ENCODE measurements at regions of chr2 and their contacts with region 1.

Region 1: GRCh38 chr2:195656859-195657633 is at the start of gene SLC39A10:
- DNase-seq: peak; percentile 99
- H3K4me3 ChIP-seq: peak within 1 kb of the TSS; percentile 61 to 99 (median 96)
- H3K27ac ChIP-seq: peak within 1 kb of the TSS; percentile 93 to 100 (median 100)
- H3K4me1 ChIP-seq: peaks cover 0 to 32% (median 22%) of the 10 kb centered on the region in 4 donors
- H3K27me3 ChIP-seq: no peaks in the 10 kb centered on the region
- CTCF ChIP-seq: peak in 2 of 4 experiments; percentile 10 to 43
- EP300 ChIP-seq: no peak
- POLR2A ChIP-seq: peak; percentile 89 to 94
- total RNA-seq, gene SLC39A10: 6.1 to 10.5 (median 9.7) TPM

Region 2: GRCh38 chr2:195498176-195498575 is 158.9 kb before region 1 on chr2:
- intact Hi-C with region 1: loop called (anchors 5 kb)
- DNase-seq: no peak
- H3K4me3 ChIP-seq: no peak overlapping the region
- H3K27ac ChIP-seq: no peak overlapping the region
- H3K4me1 ChIP-seq: no peaks in the 10 kb centered on the region
- H3K27me3 ChIP-seq: no peaks in the 10 kb centered on the region
- CTCF ChIP-seq: peak in 2 of 4 experiments; percentile 19 to 22
- EP300 ChIP-seq: no peak
- POLR2A ChIP-seq: no peak

Region 3: GRCh38 chr2:196068271-196069209 is 411.5 kb after region 1 on chr2 and contains the start of gene DNAH7:
- intact Hi-C with region 1: loop called (anchors 2 kb)
- DNase-seq: peak; percentile 95
- H3K4me3 ChIP-seq: peak within 1 kb of the TSS; percentile 82 to 87 (median 84)
- H3K27ac ChIP-seq: peak within 1 kb of the TSS; percentile 69 to 80 (median 72)
- H3K4me1 ChIP-seq: peaks cover 0 to 10% (median 6%) of the 10 kb centered on the region in 4 donors
- H3K27me3 ChIP-seq: no peaks in the 10 kb centered on the region
- CTCF ChIP-seq: peak; percentile 64 to 71 (median 65)
- EP300 ChIP-seq: no peak
- POLR2A ChIP-seq: no peak
- total RNA-seq, gene DNAH7: 0.36 to 1.9 (median 0.70) TPM

Region 4: GRCh38 chr2:196291873-196292800 is 635.1 kb after region 1 on chr2:
- intact Hi-C with region 1: no loop called
- DNase-seq: no peak
- H3K4me3 ChIP-seq: no peak overlapping the region
- H3K27ac ChIP-seq: no peak overlapping the region
- H3K4me1 ChIP-seq: no peaks in the 10 kb centered on the region
- H3K27me3 ChIP-seq: no peaks in the 10 kb centered on the region
- CTCF ChIP-seq: no peak
- EP300 ChIP-seq: no peak
- POLR2A ChIP-seq: no peak

Measured in sigmoid colon (tissue), 7 donors.